ENCODE measurements at regions of chr1 and their contacts with region 1.

Region 1: GRCh38 chr1:244599937-244600350 is 53.0 kb upstream of the DESI2 start:
- DNase-seq: peak in 3 of 5 donors; percentile 22 to 32 (median 30)
- H3K4me3 ChIP-seq: no peak overlapping the region
- H3K27ac ChIP-seq: no peak overlapping the region
- H3K4me1 ChIP-seq: no peaks in the 10 kb centered on the region
- H3K27me3 ChIP-seq: no peaks in the 10 kb centered on the region
- CTCF ChIP-seq: no peak
- EP300 ChIP-seq: no peak
- POLR2A ChIP-seq: no peak

Region 2: GRCh38 chr1:244665771-244666217 is 65.8 kb after region 1 on chr1:
- intact Hi-C with region 1: no loop called
- DNase-seq: no peak
- H3K4me3 ChIP-seq: no peak overlapping the region
- H3K27ac ChIP-seq: no peak overlapping the region
- H3K4me1 ChIP-seq: peaks cover 1% of the 10 kb centered on the region
- H3K27me3 ChIP-seq: no peaks in the 10 kb centered on the region
- CTCF ChIP-seq: no peak
- EP300 ChIP-seq: no peak
- POLR2A ChIP-seq: no peak

Region 3: DNA sequence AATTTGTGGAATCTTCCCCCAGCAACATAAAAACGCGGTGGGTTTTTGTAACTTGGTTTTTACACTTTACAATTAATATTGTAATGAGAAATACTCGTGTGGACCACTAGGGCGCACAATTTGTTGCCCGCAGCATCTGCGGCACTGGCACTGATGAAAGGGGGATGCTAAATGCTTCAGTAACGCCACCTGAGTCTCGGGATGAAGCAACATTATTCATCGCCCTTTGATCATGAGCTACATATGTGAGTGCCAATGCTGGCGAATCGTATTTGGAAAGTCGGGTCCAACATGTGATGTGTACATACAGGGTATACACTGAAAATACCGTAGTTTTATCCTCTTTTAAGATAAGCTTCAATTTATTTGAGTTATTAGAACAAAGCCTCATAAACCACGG is 201.3 kb after region 1 on chr1:
- intact Hi-C with region 1: loop called (anchors 1 to 5 kb)
- DNase-seq: no peak
- H3K4me3 ChIP-seq: no peak overlapping the region
- H3K27ac ChIP-seq: no peak overlapping the region
- H3K4me1 ChIP-seq: no peaks in the 10 kb centered on the region
- H3K27me3 ChIP-seq: no peaks in the 10 kb centered on the region
- CTCF ChIP-seq: no peak
- EP300 ChIP-seq: no peak
- POLR2A ChIP-seq: no peak

Region 4: DNA sequence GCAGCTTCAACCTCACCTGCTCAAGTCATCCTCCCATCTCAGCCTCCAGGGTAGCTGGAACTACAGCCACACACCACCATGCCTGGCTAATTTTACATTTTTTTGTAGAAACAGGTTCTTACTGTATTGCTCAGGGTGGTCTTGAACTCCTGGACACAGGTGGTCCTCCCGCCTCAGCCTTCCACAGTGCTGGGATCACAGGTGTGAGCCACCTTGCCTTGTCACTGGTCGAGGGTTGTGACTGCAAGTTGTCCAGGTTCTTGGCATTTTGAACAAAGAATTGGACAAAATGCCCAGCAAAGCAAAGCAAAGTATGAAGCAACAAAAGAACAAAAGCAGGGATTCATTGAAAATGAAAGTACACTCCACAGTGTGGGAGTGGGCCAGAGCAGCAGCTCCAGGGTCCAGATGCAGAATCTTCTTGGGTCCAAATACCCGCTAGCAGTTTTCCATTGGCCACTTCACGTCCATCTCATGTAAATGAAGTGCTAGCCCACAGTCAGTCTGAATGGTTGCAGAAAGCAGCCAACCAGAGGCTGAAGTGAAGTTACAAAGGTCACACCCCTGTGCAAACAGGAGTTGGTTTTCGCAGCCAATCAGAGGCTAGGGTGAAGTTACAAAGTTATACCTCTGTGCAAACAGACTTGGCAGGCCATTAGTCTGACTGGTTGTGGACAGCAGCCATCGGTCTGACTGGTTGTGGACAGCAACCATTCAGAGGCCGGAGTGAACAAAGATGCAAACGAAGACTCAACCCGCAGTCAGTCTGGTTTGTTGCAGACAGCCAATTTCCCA is 445.3 kb after region 1 on chr1:
- intact Hi-C with region 1: loop called in 3 of 4 experiments (anchors 5 to 10 kb)
- DNase-seq: no peak
- H3K4me3 ChIP-seq: no peak overlapping the region
- H3K27ac ChIP-seq: no peak overlapping the region
- H3K4me1 ChIP-seq: no peaks in the 10 kb centered on the region
- H3K27me3 ChIP-seq: no peaks in the 10 kb centered on the region
- CTCF ChIP-seq: no peak
- EP300 ChIP-seq: no peak
- POLR2A ChIP-seq: no peak

Region 5: GRCh38 chr1:245051349-245052221 is 451.6 kb after region 1 on chr1:
- intact Hi-C with region 1: loop called in 2 of 4 experiments (anchors 10 kb)
- DNase-seq: peak; percentile 39 to 54 (median 41)
- H3K4me3 ChIP-seq: no peak overlapping the region
- H3K27ac ChIP-seq: no peak overlapping the region
- H3K4me1 ChIP-seq: peaks cover 5% of the 10 kb centered on the region
- H3K27me3 ChIP-seq: no peaks in the 10 kb centered on the region
- CTCF ChIP-seq: no peak
- EP300 ChIP-seq: no peak
- POLR2A ChIP-seq: no peak

Measured in ovary (tissue), 10 donors.